ENCODE measurements at regions of chrX and their contacts with region 1.

Region 1: DNA sequence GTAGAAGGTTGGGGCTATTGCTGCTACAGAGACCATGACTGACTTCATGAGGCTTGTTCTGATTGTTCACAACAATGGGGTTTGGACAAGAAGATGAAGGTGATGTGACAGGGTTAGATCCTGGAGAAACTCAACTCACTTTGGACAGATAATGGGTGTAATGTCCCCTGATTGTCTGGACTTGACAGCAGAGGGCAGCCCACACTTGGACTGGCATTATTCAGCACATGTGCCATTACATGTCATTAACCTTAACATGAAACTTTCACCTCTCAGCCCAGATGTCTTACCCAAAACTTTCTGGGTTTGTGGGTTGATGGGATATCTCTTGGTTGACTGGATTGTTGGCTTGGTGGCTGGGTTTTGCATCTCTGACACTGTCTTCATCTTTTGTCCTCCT is 101.5 kb downstream of the MXRA5 start:
- DNase-seq: no peak
- ATAC-seq: no peak

Region 2: DNA sequence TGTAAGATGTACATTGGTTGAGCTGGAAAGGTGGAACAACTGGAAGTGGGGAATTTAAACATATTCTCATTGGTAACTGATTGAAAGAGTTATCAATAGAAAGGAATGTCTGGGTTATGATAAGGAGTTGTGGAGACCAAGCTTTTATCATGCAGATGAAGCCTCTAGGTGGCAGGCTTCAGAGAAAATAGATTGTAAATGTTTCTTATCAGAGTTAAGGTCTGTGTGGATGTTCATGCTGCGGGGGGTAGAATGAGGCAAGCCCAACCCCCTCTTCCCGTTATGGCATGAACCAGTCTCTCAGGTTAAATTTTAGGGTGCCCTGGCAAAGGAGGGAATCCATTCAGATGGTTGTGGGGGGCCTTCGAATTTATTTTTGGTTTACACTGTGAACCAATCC is 331.8 kb before region 1 on chrX:
- intact Hi-C with region 1: no loop called
- DNase-seq: no peak
- ATAC-seq: no peak

Region 3: GRCh38 chrX:3548765-3549391 is 303.9 kb after region 1 on chrX:
- intact Hi-C with region 1: loop called in 1 of 2 experiments (anchors 10 kb)
- DNase-seq: no peak
- ATAC-seq: peak; percentile 71 to 73

Measured in left cardiac atrium (tissue), 4 donors.